Transverse colon (tissue), 4 donors: ENCODE measurements at regions of chr2 and their contacts with region 1.

Region 1: DNA sequence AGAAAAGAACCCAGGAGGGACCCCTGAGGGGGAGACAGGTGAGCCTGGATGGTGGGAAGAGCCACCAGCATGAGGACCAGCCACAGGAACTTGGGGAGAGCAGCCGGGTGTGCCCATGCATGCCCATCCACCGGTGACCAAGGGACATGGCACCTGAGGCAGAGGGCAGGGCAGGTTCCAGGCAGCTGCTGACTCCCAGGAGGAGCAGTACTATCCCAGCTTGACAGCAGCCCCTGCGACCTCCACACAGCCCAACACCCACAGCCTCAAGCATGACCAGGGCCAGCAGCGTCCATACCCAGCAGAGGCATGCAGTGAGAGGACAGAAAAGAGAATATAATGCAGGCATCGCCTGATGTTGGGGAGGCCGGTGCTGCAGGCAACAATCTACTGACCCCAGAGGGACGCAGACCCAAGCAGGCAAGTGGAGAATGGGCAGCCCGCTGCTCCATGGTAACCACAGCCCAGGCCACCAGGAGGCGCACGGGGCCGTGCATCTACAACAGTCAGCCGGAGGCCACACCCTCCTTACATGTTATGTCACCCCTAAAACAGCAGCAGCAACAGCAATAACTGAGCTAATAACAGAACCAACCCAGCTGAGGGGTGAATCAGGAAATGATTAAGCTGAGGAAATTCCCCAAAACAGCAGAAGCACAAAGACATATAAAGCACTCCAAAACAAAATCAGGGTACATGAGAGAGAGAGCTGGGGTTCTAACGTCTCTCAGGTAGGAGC is 44.1 kb downstream of the ANKMY1 start:
- DNase-seq: peak; percentile 82
- H3K4me3 ChIP-seq: no peak overlapping the region
- H3K27ac ChIP-seq: no peak overlapping the region
- H3K4me1 ChIP-seq: peaks cover 0 to 5% (median 0%) of the 10 kb centered on the region in 4 donors
- H3K27me3 ChIP-seq: no peaks in the 10 kb centered on the region
- CTCF ChIP-seq: peak; percentile 80 to 86 (median 84)
- EP300 ChIP-seq: no peak
- POLR2A ChIP-seq: no peak

Region 2: GRCh38 chr2:240704651-240705050 is 190.9 kb after region 1 on chr2:
- in situ Hi-C with region 1: loop called in 2 of 4 experiments (anchors 25 kb)
- intact Hi-C with region 1: no loop called
- DNase-seq: no peak
- H3K4me3 ChIP-seq: no peak overlapping the region
- H3K27ac ChIP-seq: no peak overlapping the region
- H3K4me1 ChIP-seq: no peaks in the 10 kb centered on the region
- H3K27me3 ChIP-seq: peaks cover 17% of the 10 kb centered on the region
- CTCF ChIP-seq: no peak
- EP300 ChIP-seq: no peak
- POLR2A ChIP-seq: no peak